MCF 10A (cell line): ENCODE measurements at regions of chr2 and their contacts with region 1.

Region 1: GRCh38 chr2:113756355-113757137 is at the start of gene SLC35F5:
- DNase-seq: peak; percentile 87
- H3K4me3 Mint-ChIP-seq: peak within 1 kb of the TSS; percentile 75
- H3K27ac Mint-ChIP-seq: peak within 1 kb of the TSS; percentile 95
- H3K4me1 Mint-ChIP-seq: peaks cover 6% of the 10 kb centered on the region
- H3K27me3 Mint-ChIP-seq: no peaks in the 10 kb centered on the region
- CTCF ChIP-seq: no peak
- total RNA-seq, gene SLC35F5: 52.7 and 64.9 TPM in 2 replicates

Region 2: GRCh38 chr2:113675875-113676274 is 80.7 kb before region 1 on chr2:
- CTCF ChIA-PET with region 1: no interaction called
- POLR2A ChIA-PET with region 1: no interaction called
- intact Hi-C with region 1: no loop called
- DNase-seq: no peak
- H3K4me3 Mint-ChIP-seq: no peak overlapping the region
- H3K27ac Mint-ChIP-seq: no peak overlapping the region
- H3K4me1 Mint-ChIP-seq: no peaks in the 10 kb centered on the region
- H3K27me3 Mint-ChIP-seq: no peaks in the 10 kb centered on the region
- CTCF ChIP-seq: no peak

Region 3: DNA sequence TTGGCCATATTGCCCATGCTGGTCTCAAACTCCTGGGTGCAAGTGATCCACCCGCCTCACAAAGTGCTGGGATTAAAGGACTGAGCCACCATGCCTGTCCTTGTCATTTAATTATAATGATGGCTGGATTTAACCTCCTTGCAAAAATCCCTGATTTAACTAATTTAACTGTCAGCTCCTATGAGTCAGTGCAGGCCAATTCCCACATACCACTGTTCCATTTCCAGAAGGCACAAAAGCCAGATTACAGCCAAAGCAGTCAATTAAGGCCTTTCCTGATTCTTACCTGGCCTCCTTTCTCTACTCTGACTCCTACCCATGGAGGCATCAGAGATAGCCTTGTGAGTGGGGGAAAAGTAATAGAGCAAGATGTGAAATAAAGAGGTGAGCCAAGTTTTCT is 12.2 kb after region 1 on chr2:
- CTCF ChIA-PET with region 1: no interaction called
- POLR2A ChIA-PET with region 1: interaction called, 14 read pairs
- intact Hi-C with region 1: no loop called
- DNase-seq: no peak
- H3K4me3 Mint-ChIP-seq: no peak overlapping the region
- H3K27ac Mint-ChIP-seq: no peak overlapping the region
- H3K4me1 Mint-ChIP-seq: no peaks in the 10 kb centered on the region
- H3K27me3 Mint-ChIP-seq: no peaks in the 10 kb centered on the region
- CTCF ChIP-seq: no peak

Region 4: DNA sequence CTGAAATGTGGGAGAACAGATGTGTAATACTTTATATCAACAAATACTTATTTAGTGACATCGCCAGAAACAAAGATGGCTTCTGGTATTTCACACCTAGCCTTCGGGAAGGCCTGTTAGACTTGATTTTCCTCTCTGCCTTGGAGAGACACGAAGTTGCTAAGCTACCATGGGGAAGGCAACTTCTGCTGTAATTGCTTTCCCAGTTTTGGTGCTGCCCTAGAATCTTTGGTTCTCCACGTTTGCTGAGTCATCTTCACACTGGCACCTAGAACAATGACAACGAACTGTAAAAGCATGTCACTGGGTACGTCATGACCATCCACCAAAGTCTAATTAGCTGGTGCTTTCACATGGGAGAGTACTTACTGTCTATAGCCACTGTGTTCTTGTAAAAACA is 74.6 kb after region 1 on chr2:
- CTCF ChIA-PET with region 1: no interaction called
- POLR2A ChIA-PET with region 1: interaction called, 11 read pairs
- intact Hi-C with region 1: no loop called
- DNase-seq: peak; percentile 48
- H3K4me3 Mint-ChIP-seq: no peak overlapping the region
- H3K27ac Mint-ChIP-seq: no peak overlapping the region
- H3K4me1 Mint-ChIP-seq: no peaks in the 10 kb centered on the region
- H3K27me3 Mint-ChIP-seq: no peaks in the 10 kb centered on the region
- CTCF ChIP-seq: no peak

Region 5: DNA sequence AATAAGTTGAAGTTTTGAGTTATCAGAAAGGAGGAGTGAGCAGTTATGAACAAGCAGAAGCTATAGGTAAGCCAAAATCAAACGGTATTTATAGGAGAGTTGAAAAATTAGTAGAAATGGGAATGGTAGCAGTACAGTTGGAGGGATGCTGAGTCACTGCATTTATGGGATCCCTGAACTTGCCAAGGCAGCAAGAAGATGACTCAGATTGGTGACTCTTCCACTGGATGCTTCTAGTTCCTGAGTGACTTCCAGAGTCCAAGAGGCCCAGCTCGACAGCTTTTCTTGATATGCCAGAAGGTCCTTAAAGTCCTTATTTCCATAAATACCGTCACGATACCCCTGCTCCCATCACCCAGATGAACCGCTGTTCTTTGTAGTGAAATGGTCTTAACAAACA is 102.2 kb after region 1 on chr2:
- CTCF ChIA-PET with region 1: no interaction called
- POLR2A ChIA-PET with region 1: interaction called, 151 read pairs
- intact Hi-C with region 1: no loop called
- DNase-seq: peak; percentile 63
- H3K4me3 Mint-ChIP-seq: no peak overlapping the region
- H3K27ac Mint-ChIP-seq: no peak overlapping the region
- H3K4me1 Mint-ChIP-seq: peaks cover 7% of the 10 kb centered on the region
- H3K27me3 Mint-ChIP-seq: no peaks in the 10 kb centered on the region
- CTCF ChIP-seq: no peak

Region 6: DNA sequence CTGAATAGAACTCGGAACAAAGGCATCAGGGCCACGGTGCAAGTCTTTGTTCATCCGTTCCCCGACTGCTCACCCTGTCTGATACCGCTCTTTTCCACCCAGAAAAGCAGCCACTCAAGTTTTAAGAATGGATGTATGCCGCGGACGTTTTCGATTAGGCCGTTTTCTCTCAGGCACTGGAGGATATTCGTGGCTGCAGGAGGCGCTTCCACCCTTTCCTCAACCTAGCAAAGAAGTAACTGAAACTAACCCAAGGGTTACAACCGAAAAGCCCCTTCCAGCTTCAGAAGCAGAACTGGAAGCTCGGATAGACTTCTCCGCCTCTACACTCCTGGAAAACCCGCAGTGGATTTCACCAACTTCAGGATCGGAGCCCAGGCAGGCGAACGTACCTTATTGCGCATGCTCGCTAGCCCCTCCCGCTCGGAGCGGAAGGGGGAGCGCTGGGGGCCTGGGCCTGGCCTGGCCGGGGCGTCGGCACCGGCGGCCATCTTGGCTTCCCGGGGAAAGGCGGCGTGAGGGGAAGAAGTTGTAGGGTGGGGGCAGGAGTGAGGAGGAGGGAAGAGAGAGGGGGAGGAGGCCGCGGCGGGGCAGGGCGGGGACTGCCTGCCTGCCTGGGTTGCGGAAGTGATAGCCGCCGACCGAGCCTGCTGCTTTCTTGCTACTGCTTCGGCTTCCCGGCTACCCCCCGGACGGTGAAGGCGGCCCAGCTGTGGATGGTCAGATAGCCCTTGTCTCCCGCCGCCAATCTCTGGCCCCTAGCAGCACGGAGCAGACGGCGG is 133.1 kb after region 1 on chr2 and contains the start of gene ACTR3:
- CTCF ChIA-PET with region 1: interaction called, 5 read pairs
- POLR2A ChIA-PET with region 1: interaction called, 234 read pairs
- intact Hi-C with region 1: loop called (anchors 1 kb)
- DNase-seq: peak; percentile 99
- H3K4me3 Mint-ChIP-seq: peak within 1 kb of the TSS; percentile 91
- H3K27ac Mint-ChIP-seq: peak within 1 kb of the TSS; percentile 96
- H3K4me1 Mint-ChIP-seq: peaks cover 49% of the 10 kb centered on the region
- H3K27me3 Mint-ChIP-seq: no peaks in the 10 kb centered on the region
- CTCF ChIP-seq: no peak
- total RNA-seq, gene ACTR3: 260 and 311 TPM in 2 replicates

Region 7: DNA sequence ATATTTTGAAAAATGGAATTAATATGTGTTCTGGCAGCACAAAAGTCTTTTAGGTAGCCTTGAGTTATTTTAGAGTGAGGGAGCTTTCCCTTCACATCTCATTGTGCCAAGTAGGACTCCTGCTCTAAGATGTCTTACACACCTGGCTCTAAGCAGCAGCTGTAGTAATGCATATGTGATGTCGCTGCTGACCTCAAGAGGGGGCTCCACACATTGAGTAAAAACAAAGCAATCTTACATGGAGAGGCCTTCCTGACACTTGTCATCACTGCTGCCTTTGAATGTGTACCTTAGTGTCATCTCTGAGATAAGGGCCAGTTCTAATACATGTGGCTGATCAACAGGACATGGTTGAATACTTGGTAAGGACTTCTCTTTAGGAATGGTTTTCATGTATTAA is 209.1 kb after region 1 on chr2:
- CTCF ChIA-PET with region 1: no interaction called
- POLR2A ChIA-PET with region 1: interaction called, 4 read pairs
- intact Hi-C with region 1: loop called (anchors 10 kb)
- DNase-seq: peak; percentile 44
- H3K4me3 Mint-ChIP-seq: no peak overlapping the region
- H3K27ac Mint-ChIP-seq: no peak overlapping the region
- H3K4me1 Mint-ChIP-seq: peaks cover 6% of the 10 kb centered on the region
- H3K27me3 Mint-ChIP-seq: no peaks in the 10 kb centered on the region
- CTCF ChIP-seq: peak; percentile 34

Region 8: DNA sequence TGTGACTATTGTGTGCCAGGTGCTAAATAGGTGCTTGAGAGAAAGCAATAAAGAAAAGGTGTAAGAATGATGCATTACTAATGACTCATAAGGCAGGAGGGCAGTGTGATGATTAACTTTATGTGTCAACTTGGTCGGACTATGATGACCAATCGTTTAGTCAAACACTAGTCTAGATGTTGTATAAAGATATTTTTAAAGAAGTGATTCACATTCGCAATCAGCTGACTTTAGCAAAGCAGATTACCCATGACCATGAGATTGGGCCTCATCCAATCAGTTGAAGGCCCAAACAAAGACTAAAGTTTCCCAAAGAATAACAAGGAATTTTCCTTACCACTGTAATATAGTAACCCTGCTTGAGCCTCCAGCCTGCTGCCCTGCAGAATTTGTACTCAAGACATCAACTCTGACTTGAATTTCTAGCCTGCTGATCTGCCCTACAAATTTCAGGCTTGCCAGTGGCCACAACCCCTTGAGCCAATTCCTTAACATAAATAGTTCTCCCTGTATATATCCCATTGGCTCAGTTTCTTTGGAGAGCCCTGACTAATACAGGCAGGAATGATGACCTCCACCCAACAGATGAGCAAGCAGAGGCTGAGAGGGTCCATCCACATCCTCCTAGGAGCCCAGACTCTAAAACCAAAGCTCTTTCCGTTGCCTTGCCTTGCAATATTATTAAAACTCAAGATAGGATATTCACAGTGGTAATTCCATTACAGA is 266.0 kb after region 1 on chr2:
- CTCF ChIA-PET with region 1: no interaction called
- POLR2A ChIA-PET with region 1: no interaction called
- intact Hi-C with region 1: no loop called
- DNase-seq: peak; percentile 79
- H3K4me3 Mint-ChIP-seq: no peak overlapping the region
- H3K27ac Mint-ChIP-seq: peak overlapping the region; percentile 53
- H3K4me1 Mint-ChIP-seq: no peaks in the 10 kb centered on the region
- H3K27me3 Mint-ChIP-seq: no peaks in the 10 kb centered on the region
- CTCF ChIP-seq: no peak